ENCODE measurements at regions of chr20 and their contacts with region 1.

Region 1: GRCh38 chr20:6767536-6768227 is at the start of gene BMP2:
- DNase-seq: no peak
- ATAC-seq: peak; percentile 89
- H3K4me3 ChIP-seq: peak within 1 kb of the TSS; percentile 48 to 65 (median 53)
- H3K27ac ChIP-seq: no peak within 1 kb of the TSS
- H3K4me1 ChIP-seq: no peaks in the 10 kb centered on the region
- H3K27me3 ChIP-seq: peaks cover 11 to 30% of the 10 kb centered on the region in 2 experiments; a peak in 4 of 5 replicates
- CTCF ChIP-seq: peak; percentile 28; the same call in 1 of the 2 replicates
- EP300 ChIP-seq: no peak
- POLR2A ChIP-seq: no peak
- RAD21 ChIP-seq: no peak; the same call in 1 of the 2 replicates
- total RNA-seq, gene BMP2: 0.02 TPM in 1 of 2 replicates, not detected in the other

Region 2: DNA sequence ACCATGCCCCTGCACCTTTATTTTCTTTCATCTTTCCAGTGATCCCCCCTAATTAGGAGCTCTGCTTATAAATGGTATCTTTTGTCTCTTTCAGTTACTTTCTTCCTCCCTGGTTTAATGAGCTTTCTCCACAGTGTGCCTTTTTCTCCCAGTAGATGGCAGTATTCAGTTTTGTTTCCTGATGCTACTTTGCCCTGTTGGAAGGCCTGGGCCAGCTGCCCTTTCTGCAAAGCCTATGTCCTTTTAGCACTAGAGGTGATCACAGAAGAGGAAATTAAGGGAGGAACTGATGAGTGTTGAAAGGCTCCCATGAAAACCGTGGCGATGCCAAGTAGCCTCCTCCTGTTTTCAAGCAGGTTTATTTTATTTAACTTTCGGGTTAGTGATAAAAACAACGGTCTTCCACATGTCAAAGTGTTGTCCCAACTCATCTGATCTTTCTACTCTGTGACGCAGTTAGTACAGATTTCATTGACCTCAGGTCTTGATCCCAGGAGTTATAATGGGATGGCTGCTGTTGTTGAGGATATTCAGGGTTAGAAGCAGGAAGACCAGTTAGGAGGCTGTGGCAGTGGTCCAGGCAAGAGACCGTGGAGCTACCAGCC is 184.4 kb before region 1 on chr20:
- CTCF ChIA-PET with region 1: interaction called, 4 read pairs
- POLR2A ChIA-PET with region 1: no interaction called
- in situ Hi-C with region 1: no loop called
- intact Hi-C with region 1: loop called (anchors 5 kb)
- DNase-seq: peak; percentile 61
- ATAC-seq: peak; percentile 97
- H3K4me3 ChIP-seq: no peak overlapping the region
- H3K27ac ChIP-seq: no peak overlapping the region
- H3K4me1 ChIP-seq: no peaks in the 10 kb centered on the region
- H3K27me3 ChIP-seq: no peaks in the 10 kb centered on the region
- CTCF ChIP-seq: peak; percentile 89
- EP300 ChIP-seq: no peak
- POLR2A ChIP-seq: no peak
- RAD21 ChIP-seq: no peak; the same call in 1 of the 2 replicates

Region 3: GRCh38 chr20:6708010-6708409 is 59.7 kb before region 1 on chr20:
- CTCF ChIA-PET with region 1: no interaction called
- POLR2A ChIA-PET with region 1: no interaction called
- in situ Hi-C with region 1: no loop called
- intact Hi-C with region 1: no loop called
- DNase-seq: no peak
- ATAC-seq: peak; percentile 25
- H3K4me3 ChIP-seq: no peak overlapping the region
- H3K27ac ChIP-seq: no peak overlapping the region
- H3K4me1 ChIP-seq: peaks cover 57% of the 10 kb centered on the region
- H3K27me3 ChIP-seq: no peaks in the 10 kb centered on the region
- CTCF ChIP-seq: no peak
- EP300 ChIP-seq: no peak
- POLR2A ChIP-seq: no peak
- RAD21 ChIP-seq: no peak

Region 4: DNA sequence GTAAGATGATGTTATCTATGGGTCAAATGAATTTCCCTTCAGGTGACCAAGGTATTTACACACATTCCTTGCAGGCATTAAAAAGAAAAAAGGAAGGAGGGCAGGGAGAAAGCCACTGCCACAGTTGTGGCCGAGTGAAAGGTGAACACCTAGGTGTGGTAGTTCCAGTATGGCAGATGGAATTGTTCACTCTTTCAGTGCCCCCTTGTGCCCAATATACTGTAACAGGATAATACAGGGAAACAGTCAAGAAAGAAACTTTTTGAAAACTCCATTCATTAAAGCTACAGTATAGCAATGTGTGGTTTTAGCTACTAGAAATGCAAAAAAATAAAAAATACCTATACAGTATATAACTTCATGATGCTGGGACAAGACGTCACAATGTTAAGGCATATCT is 51.9 kb after region 1 on chr20:
- CTCF ChIA-PET with region 1: no interaction called
- POLR2A ChIA-PET with region 1: no interaction called
- in situ Hi-C with region 1: no loop called
- intact Hi-C with region 1: loop called (anchors 1 kb)
- DNase-seq: peak; percentile 15
- ATAC-seq: peak; percentile 81
- H3K4me3 ChIP-seq: no peak overlapping the region
- H3K27ac ChIP-seq: no peak overlapping the region
- H3K4me1 ChIP-seq: no peaks in the 10 kb centered on the region
- H3K27me3 ChIP-seq: no peaks in the 10 kb centered on the region
- CTCF ChIP-seq: peak; percentile 46
- EP300 ChIP-seq: no peak
- POLR2A ChIP-seq: no peak
- RAD21 ChIP-seq: no peak

Region 5: GRCh38 chr20:7285918-7286556 is 518.4 kb after region 1 on chr20:
- CTCF ChIA-PET with region 1: no interaction called
- POLR2A ChIA-PET with region 1: no interaction called
- in situ Hi-C with region 1: no loop called
- intact Hi-C with region 1: loop called (anchors 1 kb)
- DNase-seq: peak; percentile 80
- ATAC-seq: peak; percentile 98
- H3K4me3 ChIP-seq: no peak overlapping the region
- H3K27ac ChIP-seq: no peak overlapping the region
- H3K4me1 ChIP-seq: no peaks in the 10 kb centered on the region
- H3K27me3 ChIP-seq: no peaks in the 10 kb centered on the region
- CTCF ChIP-seq: peak; percentile 94
- EP300 ChIP-seq: no peak
- POLR2A ChIP-seq: no peak
- RAD21 ChIP-seq: peak; percentile 78